ENCODE measurements at regions of chr10 and their contacts with region 1.

Region 1: GRCh38 chr10:76984559-76985443 is 652.8 kb downstream of the KCNMA1 start:
- DNase-seq: peak; percentile 61
- ATAC-seq: peak; percentile 97
- H3K4me3 ChIP-seq: no peak overlapping the region
- H3K27ac ChIP-seq: no peak overlapping the region
- H3K4me1 ChIP-seq: no peaks in the 10 kb centered on the region
- H3K27me3 ChIP-seq: no peaks in the 10 kb centered on the region
- CTCF ChIP-seq: peak; percentile 98

Region 2: GRCh38 chr10:76547352-76547972 is 437.3 kb before region 1 on chr10:
- CTCF ChIA-PET with region 1: no interaction called
- POLR2A ChIA-PET with region 1: no interaction called
- in situ Hi-C with region 1: no loop called
- intact Hi-C with region 1: loop called (anchors 5 kb)
- DNase-seq: peak; percentile 38
- ATAC-seq: peak; percentile 81
- H3K4me3 ChIP-seq: no peak overlapping the region
- H3K27ac ChIP-seq: no peak overlapping the region
- H3K4me1 ChIP-seq: no peaks in the 10 kb centered on the region
- H3K27me3 ChIP-seq: peaks cover 11% of the 10 kb centered on the region
- CTCF ChIP-seq: peak; percentile 90

Region 3: GRCh38 chr10:77004917-77005564 is 20.2 kb after region 1 on chr10:
- CTCF ChIA-PET with region 1: no interaction called
- POLR2A ChIA-PET with region 1: no interaction called
- in situ Hi-C with region 1: no loop called
- intact Hi-C with region 1: no loop called
- DNase-seq: peak; percentile 41
- ATAC-seq: peak; percentile 85
- H3K4me3 ChIP-seq: no peak overlapping the region
- H3K27ac ChIP-seq: no peak overlapping the region
- H3K4me1 ChIP-seq: no peaks in the 10 kb centered on the region
- H3K27me3 ChIP-seq: no peaks in the 10 kb centered on the region
- CTCF ChIP-seq: peak; percentile 84

Measured in Panc1 (cell line).